Right cardiac atrium (tissue), 5 donors: ENCODE measurements at regions of chr6 and their contacts with region 1.

Region 1: DNA sequence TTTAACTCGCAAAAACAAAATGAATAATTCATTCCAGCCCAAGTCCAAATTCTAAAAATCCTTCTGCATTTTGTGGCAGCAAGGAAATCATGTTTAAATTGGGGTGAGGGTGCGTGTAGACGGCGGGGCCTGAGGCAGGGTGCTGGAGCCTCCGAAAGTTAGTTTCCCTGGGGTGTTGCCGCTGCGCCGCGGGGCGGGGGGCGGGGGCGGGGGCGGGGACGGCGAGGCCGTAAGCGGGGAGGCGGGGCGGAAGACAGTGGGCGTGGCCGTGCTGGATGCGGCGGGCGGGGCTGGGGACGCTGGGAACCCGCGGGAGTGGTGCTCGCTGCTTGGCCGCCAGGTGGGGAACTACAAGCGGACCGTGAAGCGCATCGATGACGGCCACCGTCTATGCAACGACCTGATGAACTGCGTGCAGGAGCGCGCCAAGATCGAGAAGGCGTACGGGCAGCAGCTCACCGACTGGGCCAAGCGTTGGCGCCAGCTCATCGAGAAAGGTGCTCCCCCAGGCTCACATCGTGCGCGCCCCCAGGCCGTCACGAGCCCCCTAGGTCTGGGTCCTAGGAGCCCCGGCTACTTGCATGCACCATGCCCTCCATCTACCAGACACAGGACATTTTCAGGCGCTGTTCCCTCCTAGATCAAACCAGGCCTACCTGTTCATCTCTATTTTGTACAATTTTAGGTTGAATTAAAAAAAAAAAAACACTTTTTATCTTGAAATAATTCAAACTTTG is 29.0 kb downstream of the SPDEF start:
- DNase-seq: peak; percentile 96 to 99 (median 99)
- ATAC-seq: peak; percentile 93 to 95
- H3K4me3 ChIP-seq: no peak overlapping the region
- H3K27ac ChIP-seq: no peak overlapping the region
- H3K4me1 ChIP-seq: no peaks in the 10 kb centered on the region
- H3K27me3 ChIP-seq: no peaks in the 10 kb centered on the region

Region 2: GRCh38 chr6:34595332-34596184 is 68.4 kb after region 1 on chr6:
- intact Hi-C with region 1: loop called in 2 of 4 experiments (anchors 5 to 10 kb)
- DNase-seq: no peak
- ATAC-seq: no peak
- H3K4me3 ChIP-seq: no peak overlapping the region
- H3K27ac ChIP-seq: no peak overlapping the region
- H3K4me1 ChIP-seq: peaks cover 21% of the 10 kb centered on the region
- H3K27me3 ChIP-seq: no peaks in the 10 kb centered on the region

Region 3: DNA sequence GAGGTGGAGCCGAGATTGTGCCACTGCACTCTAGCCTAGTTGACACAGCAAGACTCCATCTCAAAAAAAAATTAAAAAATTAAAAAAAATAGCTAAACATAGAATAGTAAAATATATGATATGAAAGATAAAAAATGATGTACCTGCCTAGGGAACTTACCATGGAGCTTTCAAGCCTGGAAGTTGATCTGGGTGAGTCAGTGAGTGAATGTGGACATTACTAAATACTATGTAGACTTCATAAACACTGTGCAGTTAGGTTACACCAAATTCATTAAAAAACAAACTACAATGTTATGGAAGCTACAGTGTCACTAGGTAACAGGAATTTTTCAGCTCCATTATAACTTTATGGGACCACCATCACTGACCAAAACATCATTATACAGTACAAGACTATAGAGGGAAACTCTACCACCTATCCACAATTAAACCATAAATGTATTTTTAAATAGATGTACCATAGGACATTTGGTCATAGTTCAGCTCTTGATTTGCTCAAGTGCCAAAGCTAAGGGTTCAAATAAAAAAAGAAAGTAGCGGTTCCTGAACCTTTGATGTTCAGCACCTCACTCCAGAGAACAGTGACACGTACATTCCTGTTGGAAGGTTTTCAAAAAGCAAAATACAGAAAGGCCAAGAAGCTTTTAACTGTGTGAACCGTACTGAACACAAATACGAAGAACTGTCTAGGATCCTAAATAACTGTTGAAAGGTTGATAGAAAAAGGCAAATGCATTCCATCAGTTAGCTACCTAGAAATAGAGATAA is 81.3 kb after region 1 on chr6:
- intact Hi-C with region 1: loop called in 3 of 4 experiments (anchors 5 kb)
- DNase-seq: no peak
- ATAC-seq: no peak
- H3K4me3 ChIP-seq: no peak overlapping the region
- H3K27ac ChIP-seq: no peak overlapping the region
- H3K4me1 ChIP-seq: peaks cover 3% of the 10 kb centered on the region
- H3K27me3 ChIP-seq: no peaks in the 10 kb centered on the region

Region 4: GRCh38 chr6:35297601-35298481 is 770.7 kb after region 1 on chr6 and contains the start of gene DEF6:
- intact Hi-C with region 1: no loop called
- DNase-seq: peak; percentile 82 to 94 (median 93)
- ATAC-seq: peak; percentile 94
- H3K4me3 ChIP-seq: no peak within 1 kb of the TSS
- H3K27ac ChIP-seq: no peak within 1 kb of the TSS
- H3K4me1 ChIP-seq: no peaks in the 10 kb centered on the region
- H3K27me3 ChIP-seq: no peaks in the 10 kb centered on the region
- total RNA-seq, gene DEF6: 2.2 to 3.6 (median 2.7) TPM